ENCODE measurements at regions of chr17 and their contacts with region 1.

Region 1: DNA sequence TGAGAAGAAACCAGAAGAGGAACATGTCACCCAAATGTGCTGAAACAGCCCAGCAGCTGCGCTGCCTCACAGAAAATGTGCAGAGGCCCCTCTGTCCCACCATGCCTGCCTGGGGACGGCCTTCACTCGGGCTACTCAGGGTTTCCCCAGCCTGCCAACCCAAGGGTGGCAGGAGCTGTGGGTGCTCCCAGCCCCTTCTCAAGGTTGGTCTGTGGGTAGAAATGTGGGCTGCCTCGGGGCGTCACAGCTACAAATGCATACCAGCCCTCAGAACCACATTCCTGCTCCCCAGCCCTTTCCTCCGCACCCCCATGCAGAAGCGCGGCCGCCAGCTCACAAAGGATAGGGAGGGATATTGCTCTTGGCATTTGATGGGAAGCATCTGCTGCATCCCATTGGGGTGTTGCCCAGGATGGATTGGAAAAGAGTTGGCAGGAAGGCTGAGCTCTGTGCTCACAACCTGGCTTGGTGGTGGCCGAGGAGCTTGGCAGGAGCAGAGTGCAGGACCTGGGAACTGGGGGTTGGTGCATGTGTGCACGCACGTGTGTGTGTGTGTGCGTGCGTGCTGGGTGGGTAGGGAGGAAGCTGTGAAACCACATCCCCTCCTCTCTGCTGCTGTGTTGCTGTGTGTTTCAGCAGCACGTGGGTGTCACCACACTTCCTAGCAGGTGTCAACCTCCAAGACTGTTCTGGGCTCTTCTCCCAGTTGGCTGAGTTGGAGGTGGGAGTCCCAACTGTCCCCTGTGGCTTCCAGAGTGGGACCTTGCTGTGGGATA is 304.4 kb downstream of the SEC14L1 start:
- DNase-seq: peak; percentile 92
- ATAC-seq: peak; percentile 49
- H3K4me3 ChIP-seq: peak overlapping the region; percentile 52; the same call in 1 of the 2 replicates
- H3K27ac ChIP-seq: peak overlapping the region; percentile 96
- H3K4me1 ChIP-seq: peaks cover 93% of the 10 kb centered on the region
- H3K27me3 ChIP-seq: no peaks in the 10 kb centered on the region
- CTCF ChIP-seq: no peak
- EP300 ChIP-seq: peak; percentile 98
- POLR2A ChIP-seq: peak; percentile 85
- RAD21 ChIP-seq: 0 out of 2 replicates have a peak, but pooled peaks have one; percentile 0

Region 2: GRCh38 chr17:77319211-77320043 is 125.7 kb before region 1 on chr17:
- CTCF ChIA-PET with region 1: interaction called, 9 read pairs
- POLR2A ChIA-PET with region 1: interaction called, 12 read pairs
- RAD21 ChIA-PET with region 1: interaction called, 14 read pairs
- SMC1A ChIA-PET with region 1: interaction called, 9 read pairs
- in situ Hi-C with region 1: no loop called
- intact Hi-C with region 1: no loop called
- DNase-seq: no peak
- ATAC-seq: peak; percentile 43
- H3K4me3 ChIP-seq: peak overlapping the region; percentile 84
- H3K27ac ChIP-seq: peak overlapping the region; percentile 88
- H3K4me1 ChIP-seq: peaks cover 50% of the 10 kb centered on the region
- H3K27me3 ChIP-seq: no peaks in the 10 kb centered on the region
- CTCF ChIP-seq: no peak
- EP300 ChIP-seq: peak in 1 of 2 experiments; percentile 46; a peak in 1 of 4 replicates
- POLR2A ChIP-seq: peak; percentile 82
- RAD21 ChIP-seq: no peak

Region 3: DNA sequence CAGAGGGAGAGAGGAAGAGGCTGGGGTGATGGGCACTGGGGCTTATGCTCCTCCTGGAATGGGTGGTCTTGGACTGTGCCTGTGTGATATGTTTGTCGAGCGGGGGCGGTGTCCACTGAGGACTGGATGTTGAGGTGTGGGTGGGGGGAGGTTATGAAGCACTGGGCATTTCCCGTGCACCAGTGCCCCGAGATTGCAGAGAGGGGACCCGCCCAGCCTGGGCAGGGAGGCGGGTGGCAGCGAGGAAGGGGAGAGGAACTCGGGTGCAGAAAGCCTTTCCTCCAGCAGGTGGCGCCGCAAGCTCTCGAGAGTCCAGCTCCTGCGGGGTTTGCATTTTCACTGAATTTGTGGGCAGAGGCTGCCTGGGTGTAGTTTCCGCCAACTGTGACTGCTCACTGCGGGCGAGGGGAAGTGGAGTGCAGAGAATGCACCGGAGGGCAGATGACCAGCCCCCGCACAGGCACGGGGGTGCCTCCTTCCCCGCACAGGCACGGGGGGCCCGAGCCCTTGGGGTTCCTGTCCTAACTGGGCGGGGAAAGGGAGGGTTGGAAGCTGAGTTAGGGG is 113.8 kb before region 1 on chr17:
- CTCF ChIA-PET with region 1: interaction called, 17 read pairs
- POLR2A ChIA-PET with region 1: interaction called, 3 read pairs
- RAD21 ChIA-PET with region 1: interaction called, 22 read pairs
- SMC1A ChIA-PET with region 1: interaction called, 15 read pairs
- in situ Hi-C with region 1: loop called (anchors 25 kb)
- intact Hi-C with region 1: loop called (anchors 5 kb)
- DNase-seq: peak; percentile 75
- ATAC-seq: peak; percentile 95
- H3K4me3 ChIP-seq: peak overlapping the region; percentile 39; the same call in 1 of the 2 replicates
- H3K27ac ChIP-seq: peak overlapping the region; percentile 51
- H3K4me1 ChIP-seq: peaks cover 23% of the 10 kb centered on the region
- H3K27me3 ChIP-seq: no peaks in the 10 kb centered on the region
- CTCF ChIP-seq: peak; percentile 91 to 98 (median 93)
- EP300 ChIP-seq: no peak
- POLR2A ChIP-seq: peak; percentile 57; the same call in 1 of the 2 replicates
- RAD21 ChIP-seq: peak; percentile 96

Region 4: DNA sequence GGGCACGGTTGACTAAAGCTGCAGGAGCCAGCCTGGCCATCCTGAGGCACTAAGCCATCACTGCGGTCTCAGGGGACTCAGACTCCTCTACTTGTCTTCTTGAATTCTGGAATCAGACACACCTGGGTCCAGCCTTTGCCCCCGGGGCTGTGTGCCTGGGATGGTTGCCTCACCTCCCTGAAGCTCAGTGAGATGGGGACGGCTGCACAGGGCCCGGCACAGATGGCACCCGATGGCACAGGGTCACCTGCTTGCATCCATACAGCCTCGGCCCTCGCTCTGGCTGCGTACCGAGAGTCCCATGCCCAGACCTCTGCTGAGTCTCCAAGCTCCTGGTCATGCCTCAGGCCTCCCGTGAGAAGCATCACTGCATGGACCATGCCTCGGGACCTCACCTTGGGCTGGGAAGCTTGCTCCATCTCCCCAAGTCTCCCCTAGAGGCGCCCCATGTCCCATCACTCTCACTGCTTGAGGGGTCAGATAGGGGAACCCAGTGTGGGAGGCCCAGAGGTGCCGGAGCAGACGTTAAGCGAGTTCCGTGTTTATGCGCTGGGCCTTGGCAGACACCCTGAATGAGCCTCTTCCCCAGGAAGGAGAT is 11.9 kb after region 1 on chr17:
- CTCF ChIA-PET with region 1: interaction called, 14 read pairs
- POLR2A ChIA-PET with region 1: interaction called, 78 read pairs
- RAD21 ChIA-PET with region 1: interaction called, 102 read pairs
- SMC1A ChIA-PET with region 1: interaction called, 65 read pairs
- in situ Hi-C with region 1: no loop called
- intact Hi-C with region 1: loop called (anchors 1 kb)
- DNase-seq: no peak
- ATAC-seq: peak; percentile 20
- H3K4me3 ChIP-seq: peak overlapping the region; percentile 94
- H3K27ac ChIP-seq: peak overlapping the region; percentile 99
- H3K4me1 ChIP-seq: peaks cover 69% of the 10 kb centered on the region
- H3K27me3 ChIP-seq: no peaks in the 10 kb centered on the region
- CTCF ChIP-seq: peak in 2 of 3 experiments; percentile 24 to 25; a peak in 2 of 6 replicates
- EP300 ChIP-seq: no peak
- POLR2A ChIP-seq: no peak; the same call in 1 of the 2 replicates
- RAD21 ChIP-seq: peak; percentile 26; the same call in 1 of the 2 replicates

Region 5: GRCh38 chr17:77471984-77472461 is 26.9 kb after region 1 on chr17:
- CTCF ChIA-PET with region 1: interaction called, 17 read pairs
- POLR2A ChIA-PET with region 1: interaction called, 41 read pairs
- RAD21 ChIA-PET with region 1: interaction called, 74 read pairs
- SMC1A ChIA-PET with region 1: interaction called, 82 read pairs
- in situ Hi-C with region 1: no loop called
- intact Hi-C with region 1: loop called (anchors 5 kb)
- DNase-seq: no peak
- ATAC-seq: peak; percentile 34
- H3K4me3 ChIP-seq: peak overlapping the region; percentile 48
- H3K27ac ChIP-seq: peak overlapping the region; percentile 90
- H3K4me1 ChIP-seq: peaks cover 63% of the 10 kb centered on the region
- H3K27me3 ChIP-seq: no peaks in the 10 kb centered on the region
- CTCF ChIP-seq: no peak
- EP300 ChIP-seq: no peak
- POLR2A ChIP-seq: no peak
- RAD21 ChIP-seq: no peak

Region 6: GRCh38 chr17:77494664-77495435 is 49.7 kb after region 1 on chr17:
- CTCF ChIA-PET with region 1: interaction called, 20 read pairs
- POLR2A ChIA-PET with region 1: no interaction called
- RAD21 ChIA-PET with region 1: interaction called, 12 read pairs
- SMC1A ChIA-PET with region 1: interaction called, 8 read pairs
- in situ Hi-C with region 1: no loop called
- intact Hi-C with region 1: no loop called
- DNase-seq: no peak
- ATAC-seq: peak; percentile 89
- H3K4me3 ChIP-seq: no peak overlapping the region
- H3K27ac ChIP-seq: no peak overlapping the region
- H3K4me1 ChIP-seq: peaks cover 16% of the 10 kb centered on the region
- H3K27me3 ChIP-seq: no peaks in the 10 kb centered on the region
- CTCF ChIP-seq: peak; percentile 87 to 93 (median 92)
- EP300 ChIP-seq: no peak
- POLR2A ChIP-seq: peak; percentile 51; the same call in 1 of the 2 replicates
- RAD21 ChIP-seq: peak; percentile 85

Region 7: DNA sequence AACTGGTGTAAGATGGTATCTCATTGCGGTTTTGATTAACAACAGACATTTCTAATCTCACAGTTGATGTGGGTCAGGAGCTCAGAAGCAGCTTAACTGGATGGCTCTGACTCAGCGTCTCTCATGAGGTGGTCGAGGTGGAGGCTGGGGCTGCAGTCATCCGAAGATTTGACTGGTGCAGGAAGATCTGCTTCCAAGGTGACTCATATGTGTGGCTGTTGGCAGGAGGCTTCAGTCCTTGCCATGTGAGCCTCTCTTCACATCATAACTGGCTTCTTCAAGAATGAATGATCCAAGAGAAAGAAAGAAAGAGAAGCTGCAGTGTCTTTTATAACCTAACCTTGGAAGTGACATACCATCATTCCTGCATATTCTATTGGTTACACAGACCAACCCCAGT is 71.7 kb after region 1 on chr17:
- CTCF ChIA-PET with region 1: no interaction called
- POLR2A ChIA-PET with region 1: no interaction called
- RAD21 ChIA-PET with region 1: no interaction called
- SMC1A ChIA-PET with region 1: no interaction called
- in situ Hi-C with region 1: no loop called
- intact Hi-C with region 1: no loop called
- DNase-seq: no peak
- ATAC-seq: no peak
- H3K4me3 ChIP-seq: no peak overlapping the region
- H3K27ac ChIP-seq: no peak overlapping the region
- H3K4me1 ChIP-seq: no peaks in the 10 kb centered on the region
- H3K27me3 ChIP-seq: no peaks in the 10 kb centered on the region; a peak in 1 of 4 replicates
- CTCF ChIP-seq: no peak
- EP300 ChIP-seq: no peak
- POLR2A ChIP-seq: no peak
- RAD21 ChIP-seq: no peak

Region 8: DNA sequence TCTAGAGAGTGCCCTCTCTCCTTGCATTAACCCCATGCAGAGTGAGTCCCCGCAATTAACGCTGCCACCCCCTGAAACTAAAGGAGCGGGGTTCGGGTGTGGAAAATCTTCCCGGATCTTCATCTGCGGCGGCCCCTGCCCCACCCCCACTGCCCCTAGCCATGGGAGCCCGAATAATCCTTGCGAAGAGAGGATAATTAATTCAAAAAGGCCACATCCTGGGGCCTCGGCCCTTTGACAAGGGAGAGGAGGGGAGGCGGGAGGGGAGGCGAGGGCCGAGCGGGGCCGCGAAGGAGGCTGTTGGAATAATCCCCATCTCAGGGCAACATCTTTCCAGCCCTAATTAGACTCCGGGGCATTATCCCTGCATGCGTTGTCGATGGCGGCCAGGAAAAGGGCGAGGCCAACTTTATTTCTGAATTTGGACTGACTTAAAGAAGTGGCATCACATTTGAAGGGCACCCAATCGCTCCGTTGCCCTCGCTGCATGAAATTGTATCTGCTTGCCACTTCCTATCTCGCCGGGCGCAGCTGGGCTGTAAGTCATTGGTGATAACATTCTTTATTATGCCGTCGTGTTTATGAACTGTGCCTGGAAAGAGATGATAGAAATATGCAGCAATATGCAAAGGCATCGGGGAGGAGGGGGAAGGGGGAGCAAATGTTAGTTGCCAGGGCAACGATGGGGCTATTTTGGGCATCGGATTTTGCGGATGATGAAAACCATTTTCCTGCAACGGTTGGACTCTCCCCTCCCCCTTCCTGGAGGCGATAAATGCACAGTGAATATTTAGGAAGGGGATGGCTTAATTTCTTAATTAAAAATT is 126.2 kb after region 1 on chr17:
- CTCF ChIA-PET with region 1: no interaction called
- POLR2A ChIA-PET with region 1: no interaction called
- RAD21 ChIA-PET with region 1: no interaction called
- SMC1A ChIA-PET with region 1: no interaction called
- in situ Hi-C with region 1: no loop called
- intact Hi-C with region 1: no loop called
- DNase-seq: no peak
- ATAC-seq: no peak
- H3K4me3 ChIP-seq: no peak overlapping the region
- H3K27ac ChIP-seq: no peak overlapping the region
- H3K4me1 ChIP-seq: no peaks in the 10 kb centered on the region
- H3K27me3 ChIP-seq: peaks cover 2 to 4% of the 10 kb centered on the region in 2 experiments; a peak in 3 of 4 replicates
- CTCF ChIP-seq: no peak
- EP300 ChIP-seq: no peak
- POLR2A ChIP-seq: no peak
- RAD21 ChIP-seq: no peak

Measured in GM12878 (cell line).